Colonic mucosa (tissue), 4 donors: ENCODE measurements at regions of chr2 and their contacts with region 1.

Region 1: DNA sequence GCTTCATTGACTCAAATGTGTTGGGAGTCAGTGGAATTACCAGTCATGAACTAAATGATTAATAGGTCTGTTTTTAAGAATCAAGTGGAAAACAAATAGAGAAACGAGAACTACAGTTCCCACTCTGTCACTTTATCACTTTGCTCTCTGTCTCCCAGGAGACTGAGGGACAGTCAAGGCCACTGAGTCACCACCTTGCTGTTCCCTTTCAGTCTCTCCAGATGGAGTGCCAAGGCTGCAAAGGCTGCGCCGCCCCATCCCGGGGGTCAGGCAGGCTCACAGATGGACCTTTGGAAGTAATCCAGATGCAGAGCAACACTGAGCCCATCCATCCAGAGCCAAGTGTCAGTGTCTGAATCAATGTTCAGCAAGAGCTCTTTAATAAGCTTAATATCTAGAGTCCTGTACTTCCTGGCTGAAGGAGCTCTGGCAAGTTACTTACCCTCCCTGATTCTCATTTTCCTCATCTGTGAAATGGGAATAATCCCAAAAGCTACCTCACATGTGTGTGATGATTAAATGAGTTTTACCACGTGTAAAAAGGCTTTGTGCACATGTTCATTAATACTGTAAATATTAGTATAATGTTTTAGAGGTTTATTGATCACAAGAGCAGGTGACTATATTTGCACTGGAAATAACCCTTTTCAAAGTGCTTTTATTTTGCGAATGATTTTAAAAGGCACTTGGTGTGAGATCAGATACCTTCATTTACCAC is 43.0 kb upstream of the EFEMP1 start:
- DNase-seq: peak; percentile 22
- H3K4me3 ChIP-seq: no peak overlapping the region
- H3K27ac ChIP-seq: no peak overlapping the region
- H3K4me1 ChIP-seq: no peaks in the 10 kb centered on the region
- H3K27me3 ChIP-seq: no peaks in the 10 kb centered on the region
- CTCF ChIP-seq: no peak

Region 2: GRCh38 chr2:55148269-55148668 is 818.3 kb before region 1 on chr2:
- intact Hi-C with region 1: no loop called
- DNase-seq: no peak
- H3K4me3 ChIP-seq: no peak overlapping the region
- H3K27ac ChIP-seq: no peak overlapping the region
- H3K4me1 ChIP-seq: peaks cover 2% of the 10 kb centered on the region
- H3K27me3 ChIP-seq: no peaks in the 10 kb centered on the region
- CTCF ChIP-seq: no peak

Region 3: DNA sequence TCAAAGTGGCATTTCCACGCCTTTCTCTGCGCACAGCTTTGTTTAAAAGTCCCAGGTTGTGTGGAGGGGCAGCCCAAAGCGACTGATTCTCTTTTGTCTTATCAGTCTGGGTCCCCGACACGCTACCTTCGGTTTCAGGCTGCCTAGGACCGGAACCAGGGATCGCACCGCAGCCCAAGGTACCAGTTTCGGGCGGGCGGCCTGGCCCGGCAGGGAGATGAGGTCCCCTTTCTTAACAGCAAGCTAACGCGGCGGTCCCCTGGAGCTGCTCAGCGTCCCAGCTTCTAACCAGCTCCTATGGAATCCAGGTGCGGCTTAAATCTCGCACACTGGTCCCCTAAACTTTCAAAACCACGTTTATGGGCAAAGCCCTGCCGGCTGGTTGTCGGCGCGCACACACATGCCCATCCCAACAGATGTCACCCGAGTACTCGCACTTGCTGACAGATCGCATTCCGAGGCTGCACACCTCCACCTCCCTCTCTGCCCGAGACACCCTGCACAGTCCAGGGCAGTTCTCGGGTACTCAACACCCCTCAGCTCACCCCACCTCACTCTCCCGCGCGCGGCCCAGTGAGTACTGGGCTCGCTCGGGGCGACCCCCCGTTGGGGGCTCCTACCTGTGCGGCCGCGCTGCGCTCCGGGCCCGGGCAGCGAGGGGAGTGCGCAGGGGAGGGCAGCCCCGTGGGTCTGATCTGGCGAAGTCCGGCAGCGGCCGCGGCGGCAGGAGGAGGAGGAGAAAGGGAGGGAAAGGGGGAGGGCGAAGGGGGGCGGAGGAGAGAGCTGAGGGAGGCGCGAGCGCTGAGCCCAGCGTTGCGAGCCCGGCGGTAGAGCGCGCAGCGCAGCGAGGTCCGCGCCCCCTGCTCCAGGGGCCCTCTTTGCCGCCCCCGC is 43.2 kb before region 1 on chr2 and contains the start of gene EFEMP1:
- intact Hi-C with region 1: no loop called
- DNase-seq: peak; percentile 49
- H3K4me3 ChIP-seq: peak within 1 kb of the TSS; percentile 30
- H3K27ac ChIP-seq: no peak within 1 kb of the TSS
- H3K4me1 ChIP-seq: no peaks in the 10 kb centered on the region
- H3K27me3 ChIP-seq: peaks cover 15% of the 10 kb centered on the region
- CTCF ChIP-seq: no peak
- total RNA-seq, gene EFEMP1: 16.2 to 25.2 TPM

Region 4: GRCh38 chr2:55952415-55952814 is 14.1 kb before region 1 on chr2:
- intact Hi-C with region 1: loop called (anchors 2 kb)
- DNase-seq: no peak
- H3K4me3 ChIP-seq: no peak overlapping the region
- H3K27ac ChIP-seq: no peak overlapping the region
- H3K4me1 ChIP-seq: no peaks in the 10 kb centered on the region
- H3K27me3 ChIP-seq: no peaks in the 10 kb centered on the region
- CTCF ChIP-seq: no peak